BJ (cell line): ENCODE measurements at regions of chr13 and their contacts with region 1.

Region 1: GRCh38 chr13:76980075-76980718 is 11.7 kb upstream of the CLN5 start:
- DNase-seq: no peak
- H3K4me3 ChIP-seq: peak overlapping the region; percentile 29
- H3K27me3 ChIP-seq: peaks cover 21% of the 10 kb centered on the region
- CTCF ChIP-seq: peak; percentile 100

Region 2: GRCh38 chr13:76822698-76823267 is 157.4 kb before region 1 on chr13:
- CTCF ChIA-PET with region 1: interaction called, 13 read pairs
- POLR2A ChIA-PET with region 1: no interaction called
- DNase-seq: no peak
- H3K4me3 ChIP-seq: no peak overlapping the region
- H3K27me3 ChIP-seq: no peaks in the 10 kb centered on the region; the same call in 1 of the 2 replicates
- CTCF ChIP-seq: peak; percentile 39

Region 3: DNA sequence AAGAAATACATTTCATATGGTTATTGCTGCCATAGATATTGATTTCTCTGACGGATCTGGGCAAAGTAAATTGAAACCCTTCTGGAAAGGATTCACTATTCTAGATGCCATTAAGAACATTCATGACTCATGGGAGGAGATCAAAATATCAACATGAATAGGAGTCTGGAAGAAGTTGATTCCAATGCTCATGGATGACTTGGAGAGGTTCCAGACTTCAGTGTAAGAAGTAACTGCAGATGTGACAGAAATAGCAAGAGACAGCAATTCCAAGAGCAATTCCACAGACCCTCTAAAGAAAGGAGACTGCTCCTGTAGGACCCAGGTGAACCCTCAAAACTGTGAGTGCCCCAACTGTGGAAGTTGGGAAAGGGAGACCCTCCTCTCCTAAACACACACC is 63.1 kb before region 1 on chr13:
- CTCF ChIA-PET with region 1: interaction called, 19 read pairs
- POLR2A ChIA-PET with region 1: no interaction called
- DNase-seq: no peak
- H3K4me3 ChIP-seq: no peak overlapping the region
- H3K27me3 ChIP-seq: peaks cover under 1% of the 10 kb centered on the region; the same call in 1 of the 2 replicates
- CTCF ChIP-seq: no peak

Region 4: GRCh38 chr13:76991796-76992547 is 11.8 kb after region 1 on chr13 and contains the start of gene CLN5:
- CTCF ChIA-PET with region 1: interaction called, 71 read pairs
- POLR2A ChIA-PET with region 1: no interaction called
- DNase-seq: peak; percentile 50
- H3K4me3 ChIP-seq: peak within 1 kb of the TSS; percentile 95
- H3K27me3 ChIP-seq: peaks cover 2% of the 10 kb centered on the region; the same call in 1 of the 2 replicates
- CTCF ChIP-seq: no peak
- polyA plus RNA-seq, gene CLN5: 11.0 and 22.2 TPM in 2 replicates

Region 5: DNA sequence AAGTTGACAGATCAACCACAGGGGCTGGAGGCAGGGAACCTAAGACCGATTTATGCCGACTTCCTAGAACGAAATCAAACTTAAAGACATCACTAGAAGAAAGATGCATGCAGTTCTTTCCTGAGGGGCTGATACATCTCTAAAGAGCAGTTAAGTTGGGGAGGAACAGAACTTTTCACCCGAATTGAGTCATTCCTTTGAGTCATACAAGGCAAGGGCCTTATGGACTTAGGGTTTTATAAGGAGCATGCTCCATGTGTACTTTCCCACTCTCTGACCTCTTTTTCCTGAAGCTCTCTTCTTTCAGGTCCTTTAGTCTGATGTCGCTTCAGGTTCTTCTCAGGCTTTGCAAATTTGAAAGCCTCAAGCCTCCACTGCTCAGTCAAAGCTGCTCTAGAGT is 54.7 kb after region 1 on chr13:
- CTCF ChIA-PET with region 1: no interaction called
- POLR2A ChIA-PET with region 1: no interaction called
- DNase-seq: no peak
- H3K4me3 ChIP-seq: no peak overlapping the region
- H3K27me3 ChIP-seq: no peaks in the 10 kb centered on the region
- CTCF ChIP-seq: no peak